Endothelial cell of umbilical vein (primary cell): ENCODE measurements at regions of chr14 and their contacts with region 1.

Region 1: DNA sequence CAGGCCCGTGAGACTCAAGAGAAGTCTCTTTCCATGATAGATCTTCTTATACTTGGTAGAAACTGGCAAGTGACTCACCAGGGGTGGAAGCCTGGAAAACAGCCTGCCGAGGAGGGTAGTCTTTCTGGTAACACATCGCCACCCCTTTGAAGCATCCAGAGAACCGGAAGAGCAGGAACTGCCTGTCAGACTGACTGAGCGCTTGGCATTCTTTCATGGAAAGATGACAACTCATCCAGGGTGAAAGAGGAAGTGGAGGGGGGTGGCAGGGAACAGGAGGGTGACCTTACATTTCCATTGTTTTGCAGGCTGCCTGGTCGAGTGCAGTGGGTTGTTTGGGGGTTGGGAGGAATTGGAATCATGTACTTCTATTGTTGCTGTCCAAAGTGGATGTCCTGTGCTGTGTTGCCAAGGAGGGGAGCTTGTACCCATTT is 34.5 kb downstream of the PRKCH start:
- DNase-seq: peak; percentile 100
- H3K4me3 ChIP-seq: peak overlapping the region in 1 of 3 experiments; percentile 7
- H3K27ac ChIP-seq: peak overlapping the region; percentile 85
- H3K4me1 ChIP-seq: peaks cover 57% of the 10 kb centered on the region
- H3K27me3 ChIP-seq: no peaks in the 10 kb centered on the region
- CTCF ChIP-seq: no peak
- POLR2A ChIP-seq: peak; percentile 82

Region 2: GRCh38 chr14:61308198-61308597 is 47.7 kb before region 1 on chr14:
- CTCF ChIA-PET with region 1: interaction called, 6 read pairs
- POLR2A ChIA-PET with region 1: no interaction called
- dilution Hi-C with region 1: no loop called
- intact Hi-C with region 1: loop called (anchors 1 kb)
- DNase-seq: peak; percentile 96
- H3K4me3 ChIP-seq: no peak overlapping the region
- H3K27ac ChIP-seq: peak overlapping the region; percentile 89
- H3K4me1 ChIP-seq: peaks cover 28% of the 10 kb centered on the region
- H3K27me3 ChIP-seq: no peaks in the 10 kb centered on the region
- CTCF ChIP-seq: no peak
- POLR2A ChIP-seq: peak; percentile 84

Region 3: GRCh38 chr14:61326847-61327246 is 29.1 kb before region 1 on chr14:
- CTCF ChIA-PET with region 1: interaction called, 3 read pairs
- POLR2A ChIA-PET with region 1: interaction called, 3 read pairs
- dilution Hi-C with region 1: no loop called
- intact Hi-C with region 1: loop called (anchors 1 kb)
- DNase-seq: peak; percentile 97
- H3K4me3 ChIP-seq: peak overlapping the region in 1 of 3 experiments; percentile 56
- H3K27ac ChIP-seq: peak overlapping the region; percentile 92
- H3K4me1 ChIP-seq: peaks cover 33% of the 10 kb centered on the region
- H3K27me3 ChIP-seq: no peaks in the 10 kb centered on the region
- CTCF ChIP-seq: no peak
- POLR2A ChIP-seq: peak; percentile 41

Region 4: GRCh38 chr14:61344437-61345150 is 11.3 kb before region 1 on chr14:
- CTCF ChIA-PET with region 1: no interaction called
- POLR2A ChIA-PET with region 1: interaction called, 3 read pairs
- dilution Hi-C with region 1: no loop called
- intact Hi-C with region 1: loop called (anchors 1 kb)
- DNase-seq: no peak
- H3K4me3 ChIP-seq: no peak overlapping the region
- H3K27ac ChIP-seq: peak overlapping the region; percentile 27
- H3K4me1 ChIP-seq: peaks cover 77% of the 10 kb centered on the region
- H3K27me3 ChIP-seq: no peaks in the 10 kb centered on the region
- CTCF ChIP-seq: no peak
- POLR2A ChIP-seq: no peak

Region 5: DNA sequence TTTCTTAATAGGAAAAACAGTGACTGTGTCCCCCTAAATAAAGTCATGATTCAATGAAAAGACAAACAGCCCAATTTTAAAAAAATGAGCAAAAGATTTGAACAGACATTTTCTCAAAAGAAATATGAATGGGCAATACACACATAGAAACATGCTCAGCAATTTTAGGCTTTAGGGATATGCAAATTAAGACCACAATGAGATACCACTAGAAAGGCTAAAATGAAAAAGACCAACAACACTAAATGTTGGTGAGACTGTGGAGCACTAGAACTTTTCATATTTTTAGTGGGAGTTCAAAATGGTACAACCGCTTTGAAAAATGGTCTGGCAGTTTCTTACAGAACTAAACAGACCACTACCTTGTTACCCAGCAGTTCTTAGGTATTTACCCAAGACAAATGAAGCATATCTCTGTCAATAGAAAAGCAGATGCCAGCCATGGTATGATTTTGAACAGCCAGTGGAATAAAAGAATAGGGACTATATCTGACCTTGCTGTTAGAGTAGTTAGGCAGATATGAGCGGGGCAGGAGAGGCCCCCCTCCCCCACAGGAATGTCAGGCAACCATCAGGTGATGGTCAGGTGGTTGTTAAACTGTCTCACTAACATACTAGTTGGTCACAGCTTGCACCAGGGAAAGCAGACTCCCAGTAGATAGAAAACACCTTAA is 74.3 kb after region 1 on chr14:
- CTCF ChIA-PET with region 1: interaction called, 3 read pairs
- POLR2A ChIA-PET with region 1: no interaction called
- dilution Hi-C with region 1: no loop called
- intact Hi-C with region 1: loop called (anchors 1 kb)
- DNase-seq: no peak
- H3K4me3 ChIP-seq: no peak overlapping the region
- H3K27ac ChIP-seq: no peak overlapping the region
- H3K4me1 ChIP-seq: peaks cover 46% of the 10 kb centered on the region
- H3K27me3 ChIP-seq: no peaks in the 10 kb centered on the region
- CTCF ChIP-seq: no peak
- POLR2A ChIP-seq: no peak

Region 6: DNA sequence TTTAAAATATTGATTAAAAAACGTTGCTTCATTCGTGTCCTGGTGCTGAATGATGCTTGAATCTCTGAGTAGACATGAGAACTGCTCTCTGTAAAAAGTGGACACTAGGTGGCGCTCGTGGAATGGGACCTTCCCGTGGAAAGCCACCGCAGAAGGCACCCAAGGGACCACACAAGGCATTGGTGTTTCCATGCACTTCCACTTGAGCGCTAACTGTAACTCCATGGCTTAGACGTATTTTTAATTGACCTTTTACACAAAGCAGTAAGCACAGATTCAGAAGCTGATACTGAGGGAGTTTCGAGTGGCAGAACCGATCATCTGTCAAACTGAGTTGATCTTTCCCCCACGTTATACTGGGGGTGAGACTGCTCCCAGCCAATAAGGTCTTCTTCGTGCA is 100.8 kb after region 1 on chr14:
- CTCF ChIA-PET with region 1: no interaction called
- POLR2A ChIA-PET with region 1: no interaction called
- dilution Hi-C with region 1: no loop called
- intact Hi-C with region 1: loop called (anchors 1 kb)
- DNase-seq: peak; percentile 72
- H3K4me3 ChIP-seq: no peak overlapping the region
- H3K27ac ChIP-seq: no peak overlapping the region
- H3K4me1 ChIP-seq: peaks cover 22% of the 10 kb centered on the region
- H3K27me3 ChIP-seq: no peaks in the 10 kb centered on the region
- CTCF ChIP-seq: peak; percentile 75 to 79
- POLR2A ChIP-seq: no peak

Region 7: DNA sequence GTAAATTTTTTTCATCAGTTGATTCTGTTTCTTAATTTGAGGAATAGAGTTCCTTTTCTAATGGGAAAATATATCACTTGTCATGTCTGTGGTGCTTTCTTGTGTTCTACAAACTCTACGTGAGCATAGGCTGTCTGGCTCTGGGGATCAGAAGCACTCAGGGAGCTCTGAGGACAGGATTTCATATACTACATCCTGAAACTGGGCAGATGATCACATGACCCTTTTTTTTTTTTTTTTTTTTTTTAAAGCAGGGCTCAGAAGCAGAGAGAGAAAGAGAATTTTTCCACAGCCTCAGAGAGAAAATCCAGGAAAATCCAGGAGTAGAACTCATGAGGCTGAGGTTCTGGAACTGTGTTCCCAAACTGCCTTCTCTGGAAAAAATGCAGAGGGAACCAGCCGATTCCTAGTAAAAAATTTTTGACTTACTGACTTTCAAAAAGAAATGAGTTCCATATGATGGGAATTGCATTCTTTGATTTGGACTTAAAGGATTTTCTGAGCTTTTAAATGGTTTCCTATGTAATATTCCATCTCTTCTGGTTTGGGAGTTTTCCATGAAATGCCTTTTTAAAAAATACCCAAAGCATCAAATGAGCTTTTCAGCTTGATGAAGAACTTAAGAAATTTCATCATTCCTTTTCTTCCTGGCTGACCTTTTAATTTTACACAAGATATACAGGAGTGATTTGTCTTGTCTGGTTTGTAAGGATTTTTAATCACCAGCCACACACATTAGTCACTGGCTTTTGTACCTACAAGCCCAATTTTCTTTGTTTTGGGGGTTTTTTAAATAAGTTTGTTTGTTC is 156.3 kb after region 1 on chr14:
- CTCF ChIA-PET with region 1: no interaction called
- POLR2A ChIA-PET with region 1: no interaction called
- dilution Hi-C with region 1: no loop called
- intact Hi-C with region 1: no loop called
- DNase-seq: peak; percentile 32
- H3K4me3 ChIP-seq: no peak overlapping the region
- H3K27ac ChIP-seq: no peak overlapping the region
- H3K4me1 ChIP-seq: peaks cover 18% of the 10 kb centered on the region
- H3K27me3 ChIP-seq: no peaks in the 10 kb centered on the region
- CTCF ChIP-seq: no peak
- POLR2A ChIP-seq: no peak